AG04449 (cell line): ENCODE measurements at regions of chr1 and their contacts with region 1.

Region 1: DNA sequence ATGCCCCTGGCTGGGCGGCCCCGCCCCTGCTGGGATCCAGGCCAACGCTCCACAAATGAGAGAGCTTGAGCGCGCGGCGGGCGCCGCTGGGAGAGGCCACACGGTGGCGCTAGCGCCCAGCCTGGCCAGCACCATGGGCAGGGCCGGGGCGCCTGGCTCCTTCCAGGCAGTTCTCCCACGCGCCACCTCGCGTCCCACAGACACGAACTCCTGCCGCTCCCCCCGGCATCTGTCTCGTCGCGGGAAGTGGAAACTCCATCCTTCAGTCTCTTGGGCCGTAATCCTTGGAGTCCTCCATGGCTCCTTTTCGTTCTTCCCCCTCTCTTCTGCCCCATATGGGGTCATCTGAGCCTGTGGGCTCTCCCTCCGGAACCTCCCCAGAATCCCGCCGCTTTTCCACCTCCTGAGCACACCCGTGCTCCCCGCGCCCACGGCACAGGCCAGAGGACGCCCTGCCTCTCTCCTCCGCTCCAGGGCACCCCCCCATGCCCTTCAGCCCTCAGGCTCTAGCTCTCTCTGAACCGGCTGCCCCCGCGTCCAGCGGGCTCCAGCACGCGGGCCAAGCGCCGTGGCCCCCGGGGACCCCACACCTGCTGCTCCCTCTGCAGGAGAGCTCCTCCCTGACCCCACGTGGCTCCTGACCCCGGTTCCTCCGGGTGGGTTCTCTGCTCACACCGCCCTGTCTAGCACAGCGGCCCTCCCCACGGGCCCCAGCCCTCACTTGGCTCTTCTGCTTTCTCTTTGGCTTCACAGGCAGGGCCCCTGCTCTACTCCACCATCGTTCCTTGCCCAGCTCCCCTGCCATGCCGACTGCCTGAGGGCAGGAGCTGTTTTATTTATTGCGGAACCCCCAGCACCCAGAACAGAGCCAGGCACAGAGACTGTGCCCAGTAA is 31.9 kb upstream of the EDN2 start:
- DNase-seq: no peak
- H3K4me3 ChIP-seq: peak overlapping the region; percentile 13
- CTCF ChIP-seq: peak; percentile 99

Region 2: GRCh38 chr1:41152622-41153044 is 363.8 kb before region 1 on chr1:
- CTCF ChIA-PET with region 1: no interaction called
- POLR2A ChIA-PET with region 1: no interaction called
- DNase-seq: peak; percentile 84
- H3K4me3 ChIP-seq: no peak overlapping the region
- CTCF ChIP-seq: no peak

Region 3: GRCh38 chr1:41496080-41497055 is 20.0 kb before region 1 on chr1:
- CTCF ChIA-PET with region 1: interaction called, 105 read pairs
- POLR2A ChIA-PET with region 1: interaction called, 3 read pairs
- DNase-seq: no peak
- H3K4me3 ChIP-seq: peak overlapping the region; percentile 36
- CTCF ChIP-seq: no peak

Region 4: GRCh38 chr1:41504114-41505035 is 12.0 kb before region 1 on chr1:
- CTCF ChIA-PET with region 1: interaction called, 105 read pairs
- POLR2A ChIA-PET with region 1: no interaction called
- DNase-seq: no peak
- H3K4me3 ChIP-seq: no peak overlapping the region
- CTCF ChIP-seq: no peak

Region 5: DNA sequence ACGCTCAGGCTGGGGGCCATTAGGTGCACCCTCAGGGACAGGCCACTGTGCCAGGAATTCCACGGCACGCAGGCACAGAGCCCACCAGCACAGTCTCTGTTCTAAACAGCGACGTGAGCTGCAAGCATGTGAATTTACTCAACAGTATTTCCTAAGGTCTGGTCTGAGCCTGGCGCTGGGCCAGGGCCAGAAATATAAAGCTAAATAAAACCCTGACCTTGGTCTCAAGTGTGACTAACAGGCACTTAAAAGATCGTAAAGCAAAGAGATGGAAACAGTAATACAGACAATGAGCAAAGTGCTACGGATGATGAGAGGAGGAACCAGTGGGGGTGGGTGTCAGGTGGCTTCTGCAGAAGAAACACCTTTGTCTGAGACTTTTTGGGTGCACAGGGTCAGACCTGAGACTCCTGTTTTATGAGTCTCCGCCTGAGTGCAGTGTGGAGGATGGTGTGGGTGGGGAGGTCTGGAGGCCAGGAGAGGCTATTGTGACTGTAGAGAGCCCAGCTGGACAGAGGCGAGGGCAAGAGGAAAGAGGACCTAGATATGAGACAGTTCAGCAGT is 21.5 kb after region 1 on chr1:
- CTCF ChIA-PET with region 1: interaction called, 116 read pairs
- POLR2A ChIA-PET with region 1: no interaction called
- DNase-seq: peak; percentile 56
- H3K4me3 ChIP-seq: no peak overlapping the region
- CTCF ChIP-seq: no peak